CD4-positive, alpha-beta memory T cell (primary cell): ENCODE measurements at regions of chr7 and their contacts with region 1.

Region 1: GRCh38 chr7:105876091-105876963 is at the start of gene ATXN7L1:
- DNase-seq: peak; percentile 85 to 90 (median 86)
- H3K4me3 ChIP-seq: peak within 1 kb of the TSS; percentile 78 to 92
- H3K4me3 Mint-ChIP-seq: peak within 1 kb of the TSS; percentile 95 to 100 (median 98)
- H3K27ac ChIP-seq: peak within 1 kb of the TSS; percentile 82
- H3K27ac Mint-ChIP-seq: peak within 1 kb of the TSS; percentile 83 to 99 (median 96)
- H3K4me1 ChIP-seq: peaks cover 52% of the 10 kb centered on the region
- H3K4me1 Mint-ChIP-seq: peaks cover 43 to 63% (median 51%) of the 10 kb centered on the region in 4 donors
- H3K27me3 ChIP-seq: no peaks in the 10 kb centered on the region
- H3K27me3 Mint-ChIP-seq: no peaks in the 10 kb centered on the region
- total RNA-seq, gene ATXN7L1: 60.4 to 62.2 TPM

Region 2: DNA sequence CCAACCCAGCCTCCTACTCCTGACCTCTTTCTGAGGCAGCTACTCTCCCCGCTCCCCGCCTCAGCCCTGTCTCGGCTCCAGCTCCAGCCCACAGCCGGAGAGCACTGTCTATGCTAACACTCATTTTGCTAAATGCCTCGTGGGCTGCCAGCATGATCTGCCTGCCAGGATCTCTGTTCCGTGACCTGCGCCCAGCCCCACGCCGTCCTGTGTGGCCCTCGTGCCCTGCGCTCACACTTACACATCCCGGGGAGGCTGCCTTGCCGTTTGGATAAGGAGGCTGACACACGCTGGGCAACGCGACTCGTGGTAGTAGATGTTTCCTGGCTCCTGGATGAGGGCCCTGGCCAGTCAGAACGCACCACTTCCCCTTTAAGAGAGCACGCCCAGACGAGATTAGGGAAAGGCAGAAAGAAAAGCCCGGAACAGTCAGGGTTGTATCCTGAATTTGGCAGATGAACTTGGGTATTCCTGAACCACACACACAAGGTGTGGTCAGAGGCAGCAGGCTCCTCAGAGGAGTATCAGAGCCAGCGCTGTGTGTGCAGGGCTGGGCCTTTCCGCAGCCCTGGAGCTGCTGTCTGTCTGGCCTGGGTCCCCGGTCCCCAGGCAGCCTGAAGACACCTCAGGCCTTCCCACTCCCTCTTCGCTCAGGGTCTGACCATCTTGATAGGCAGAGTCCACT is 197.4 kb before region 1 on chr7:
- CTCF ChIA-PET with region 1: interaction called, 4 read pairs
- POLR2A ChIA-PET with region 1: interaction called, 15 read pairs
- intact Hi-C with region 1: loop called (anchors 1 kb)
- DNase-seq: peak in 2 of 5 donors; percentile 17 to 27
- H3K4me3 ChIP-seq: peak overlapping the region; percentile 12 to 27
- H3K4me3 Mint-ChIP-seq: peak overlapping the region; percentile 86 to 95 (median 92)
- H3K27ac ChIP-seq: peak overlapping the region; percentile 83
- H3K27ac Mint-ChIP-seq: peak overlapping the region; percentile 90 to 99 (median 96)
- H3K4me1 ChIP-seq: peaks cover 63% of the 10 kb centered on the region
- H3K4me1 Mint-ChIP-seq: peaks cover 61 to 94% (median 74%) of the 10 kb centered on the region in 4 donors
- H3K27me3 ChIP-seq: no peaks in the 10 kb centered on the region
- H3K27me3 Mint-ChIP-seq: no peaks in the 10 kb centered on the region

Region 3: GRCh38 chr7:105849122-105849855 is 27.0 kb before region 1 on chr7:
- CTCF ChIA-PET with region 1: interaction called, 35 read pairs
- POLR2A ChIA-PET with region 1: interaction called, 39 read pairs
- intact Hi-C with region 1: loop called (anchors 2 kb)
- DNase-seq: peak; percentile 63 to 81 (median 71)
- H3K4me3 ChIP-seq: peak overlapping the region; percentile 16 to 18
- H3K4me3 Mint-ChIP-seq: peak overlapping the region; percentile 60 to 87 (median 78)
- H3K27ac ChIP-seq: peak overlapping the region; percentile 35
- H3K27ac Mint-ChIP-seq: peak overlapping the region; percentile 74 to 96 (median 94)
- H3K4me1 ChIP-seq: peaks cover 58% of the 10 kb centered on the region
- H3K4me1 Mint-ChIP-seq: peaks cover 56 to 65% (median 58%) of the 10 kb centered on the region in 4 donors
- H3K27me3 ChIP-seq: no peaks in the 10 kb centered on the region
- H3K27me3 Mint-ChIP-seq: no peaks in the 10 kb centered on the region

Region 4: DNA sequence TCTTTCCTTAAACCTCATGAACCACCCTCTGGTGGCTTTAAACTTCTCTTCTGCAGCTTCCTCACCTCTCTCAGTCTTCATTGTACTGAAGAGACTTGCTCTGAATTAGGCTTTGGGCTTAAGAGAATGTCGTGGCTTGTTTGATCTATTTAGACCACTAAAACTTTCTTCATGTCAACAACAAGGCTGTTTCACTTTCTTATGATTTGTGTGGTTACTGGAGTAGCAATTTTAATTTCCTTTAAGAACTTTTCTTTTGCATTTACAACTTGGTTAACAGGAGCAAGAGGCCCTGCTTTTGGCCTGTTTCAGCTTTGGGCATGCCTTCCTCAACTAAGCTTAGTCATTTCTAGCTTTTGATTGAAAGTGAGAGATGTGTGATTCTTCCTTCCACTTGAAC is 48.6 kb after region 1 on chr7:
- CTCF ChIA-PET with region 1: interaction called, 10 read pairs
- POLR2A ChIA-PET with region 1: interaction called, 4 read pairs
- intact Hi-C with region 1: no loop called
- DNase-seq: peak in 3 of 5 donors; percentile 51 to 60 (median 52)
- H3K4me3 ChIP-seq: no peak overlapping the region
- H3K4me3 Mint-ChIP-seq: peak overlapping the region in 5 of 8 donors; percentile 6 to 47 (median 9)
- H3K27ac ChIP-seq: no peak overlapping the region
- H3K27ac Mint-ChIP-seq: peak overlapping the region; percentile 33 to 92 (median 74)
- H3K4me1 ChIP-seq: peaks cover 24% of the 10 kb centered on the region
- H3K4me1 Mint-ChIP-seq: peaks cover 21 to 40% (median 32%) of the 10 kb centered on the region in 4 donors
- H3K27me3 ChIP-seq: no peaks in the 10 kb centered on the region
- H3K27me3 Mint-ChIP-seq: no peaks in the 10 kb centered on the region

Region 5: DNA sequence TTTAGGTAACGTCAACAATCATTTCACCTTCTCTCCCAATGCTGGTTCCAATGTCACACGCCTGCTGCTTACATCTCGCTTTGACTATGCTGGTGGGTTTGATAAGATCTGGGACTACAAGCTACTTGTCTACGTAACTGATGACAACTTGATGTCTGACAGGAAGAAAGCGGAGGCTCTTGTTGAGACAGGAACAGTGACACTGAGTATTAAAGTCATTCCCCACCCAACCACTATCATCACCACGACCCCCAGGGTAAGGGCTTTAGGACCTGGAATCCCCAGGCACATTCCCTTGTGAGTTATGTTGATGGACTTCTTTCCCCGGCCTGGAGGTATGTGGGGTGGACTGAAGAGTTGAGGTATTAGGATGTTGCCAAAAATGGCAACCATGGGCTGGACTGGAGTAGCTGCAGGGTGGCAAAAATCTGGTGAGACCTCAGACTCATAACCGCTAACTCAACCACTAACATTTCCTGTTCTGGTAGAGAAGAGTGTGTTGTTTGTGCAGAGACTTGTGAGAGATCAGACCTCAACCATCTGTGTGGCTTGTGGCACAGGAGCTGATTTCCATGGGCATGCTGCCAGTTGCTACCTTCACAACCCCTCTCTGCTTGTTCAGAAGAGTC is 146.0 kb after region 1 on chr7:
- CTCF ChIA-PET with region 1: interaction called, 5 read pairs
- POLR2A ChIA-PET with region 1: interaction called, 20 read pairs
- intact Hi-C with region 1: loop called (anchors 1 kb)
- DNase-seq: peak; percentile 89 to 92 (median 91)
- H3K4me3 ChIP-seq: peak overlapping the region in 1 of 2 donors; percentile 48
- H3K4me3 Mint-ChIP-seq: peak overlapping the region; percentile 5 to 82 (median 72)
- H3K27ac ChIP-seq: peak overlapping the region; percentile 48
- H3K27ac Mint-ChIP-seq: peak overlapping the region; percentile 88 to 99 (median 98)
- H3K4me1 ChIP-seq: peaks cover 52% of the 10 kb centered on the region
- H3K4me1 Mint-ChIP-seq: peaks cover 38 to 70% (median 48%) of the 10 kb centered on the region in 4 donors
- H3K27me3 ChIP-seq: no peaks in the 10 kb centered on the region
- H3K27me3 Mint-ChIP-seq: no peaks in the 10 kb centered on the region